Dorsolateral prefrontal cortex (tissue), 120 donors: ENCODE measurements at regions of chr7 and their contacts with region 1.

Region 1: DNA sequence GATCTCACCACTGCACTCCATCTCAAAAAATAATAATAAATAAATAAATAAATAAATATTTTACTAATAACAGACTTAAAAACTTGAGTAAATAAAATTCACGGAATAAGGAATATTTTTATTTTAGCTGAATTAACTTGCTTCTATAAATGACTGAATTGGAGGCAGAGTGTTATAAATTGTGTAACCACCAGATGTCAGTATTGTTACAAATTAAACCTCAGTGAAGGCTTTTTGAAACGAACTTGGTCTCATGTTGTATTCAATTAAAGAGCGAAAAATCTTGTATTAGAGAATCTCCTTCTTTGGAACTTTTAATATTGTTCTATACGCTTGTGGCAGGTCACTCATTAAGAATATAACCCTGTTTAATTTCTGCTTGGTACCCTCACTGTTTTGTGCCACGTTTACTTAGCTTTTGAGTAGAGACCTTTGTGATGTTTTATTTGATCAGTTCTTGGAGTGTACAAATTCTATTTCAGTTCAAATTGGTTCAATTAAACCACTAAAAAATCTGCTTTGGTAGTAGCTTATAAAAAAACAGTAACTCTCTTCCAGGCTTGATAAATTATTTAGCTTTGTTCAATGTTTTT is 45.6 kb upstream of the SCIN start:
- DNase-seq: no peak
- H3K4me3 ChIP-seq: peak overlapping the region in 1 of 59 donors; percentile 17
- H3K27ac ChIP-seq: no peak overlapping the region
- H3K27me3 ChIP-seq: peaks cover 0 to 15% (median 0%) of the 10 kb centered on the region in 45 donors
- CTCF ChIP-seq: peak; percentile 65 to 91 (median 78)

Region 2: DNA sequence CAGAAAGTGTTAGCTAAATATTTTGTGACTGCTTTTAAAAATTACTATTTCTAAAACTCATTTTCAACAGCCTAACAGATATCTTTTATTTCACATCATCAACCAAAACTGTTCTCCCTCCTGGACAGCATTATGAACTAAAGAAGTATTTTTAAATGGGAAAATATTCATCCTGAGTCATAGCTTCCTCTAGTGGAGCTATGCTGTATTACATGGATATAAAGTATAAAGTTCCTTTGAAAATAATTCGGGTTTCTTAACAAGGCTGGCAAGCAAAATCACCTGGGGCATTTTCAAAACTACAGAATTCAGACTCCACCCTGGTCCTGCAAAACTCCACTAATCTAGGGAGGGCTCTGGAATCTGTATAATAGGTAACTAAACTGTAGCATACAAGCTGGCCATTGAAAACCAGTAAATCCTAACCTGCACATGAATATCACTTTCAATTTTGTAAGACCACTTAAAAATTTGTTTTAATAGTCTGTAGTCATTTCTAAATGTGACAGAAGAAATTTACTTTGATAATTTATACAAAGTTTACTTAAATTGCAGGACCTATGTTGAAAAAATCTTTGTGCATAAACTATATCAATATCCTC is 99.1 kb after region 1 on chr7:
- intact Hi-C with region 1: loop called (anchors 5 to 10 kb)
- DNase-seq: no peak
- H3K4me3 ChIP-seq: no peak overlapping the region
- H3K27ac ChIP-seq: no peak overlapping the region
- H3K27me3 ChIP-seq: peaks cover 0 to 7% (median 0%) of the 10 kb centered on the region in 45 donors
- CTCF ChIP-seq: peak; percentile 41 to 78 (median 67)

Region 3: GRCh38 chr7:13262929-13263530 is 738.1 kb after region 1 on chr7:
- intact Hi-C with region 1: loop called (anchors 5 to 10 kb)
- DNase-seq: no peak
- H3K4me3 ChIP-seq: no peak overlapping the region
- H3K27ac ChIP-seq: no peak overlapping the region
- H3K27me3 ChIP-seq: peaks cover 0 to 3% (median 0%) of the 10 kb centered on the region in 45 donors
- CTCF ChIP-seq: peak; percentile 58 to 93 (median 75)